IMR-90 (cell line): ENCODE measurements at regions of chr1 and their contacts with region 1.

Region 1: GRCh38 chr1:225474986-225475820 is 47.4 kb upstream of the LBR start:
- DNase-seq: peak; percentile 66
- ATAC-seq: peak; percentile 93
- H3K4me3 ChIP-seq: no peak overlapping the region
- H3K27ac ChIP-seq: peak overlapping the region; percentile 31; the same call in 1 of the 2 replicates
- H3K4me1 ChIP-seq: peaks cover 2% of the 10 kb centered on the region
- H3K27me3 ChIP-seq: peaks cover 2% of the 10 kb centered on the region; the same call in 1 of the 2 replicates
- CTCF ChIP-seq: peak; percentile 100; the same call in 1 of the 2 replicates
- POLR2A ChIP-seq: peak; percentile 74
- RAD21 ChIP-seq: peak; percentile 100

Region 2: GRCh38 chr1:225388372-225388771 is 86.8 kb before region 1 on chr1:
- CTCF ChIA-PET with region 1: no interaction called
- POLR2A ChIA-PET with region 1: no interaction called
- dilution Hi-C with region 1: no loop called
- in situ Hi-C with region 1: no loop called
- intact Hi-C with region 1: no loop called
- DNase-seq: peak; percentile 5
- ATAC-seq: no peak
- H3K4me3 ChIP-seq: no peak overlapping the region
- H3K27ac ChIP-seq: no peak overlapping the region
- H3K4me1 ChIP-seq: no peaks in the 10 kb centered on the region
- H3K27me3 ChIP-seq: no peaks in the 10 kb centered on the region
- CTCF ChIP-seq: no peak
- POLR2A ChIP-seq: no peak
- RAD21 ChIP-seq: no peak

Region 3: GRCh38 chr1:225772323-225772768 is 297.1 kb after region 1 on chr1:
- CTCF ChIA-PET with region 1: interaction called, 23 read pairs
- POLR2A ChIA-PET with region 1: no interaction called
- dilution Hi-C with region 1: no loop called
- in situ Hi-C with region 1: loop called (anchors 5 kb)
- intact Hi-C with region 1: loop called (anchors 1 kb)
- DNase-seq: peak; percentile 88
- ATAC-seq: peak; percentile 90
- H3K4me3 ChIP-seq: no peak overlapping the region
- H3K27ac ChIP-seq: peak overlapping the region; percentile 20; the same call in 1 of the 2 replicates
- H3K4me1 ChIP-seq: peaks cover 16% of the 10 kb centered on the region
- H3K27me3 ChIP-seq: no peaks in the 10 kb centered on the region
- CTCF ChIP-seq: peak; percentile 94
- POLR2A ChIP-seq: peak; percentile 60; the same call in 1 of the 2 replicates
- RAD21 ChIP-seq: peak; percentile 99

Region 4: GRCh38 chr1:225845571-225846259 is 370.5 kb after region 1 on chr1:
- CTCF ChIA-PET with region 1: interaction called, 12 read pairs
- POLR2A ChIA-PET with region 1: no interaction called
- dilution Hi-C with region 1: no loop called
- in situ Hi-C with region 1: loop called (anchors 10 kb)
- intact Hi-C with region 1: loop called (anchors 1 kb)
- DNase-seq: peak; percentile 75
- ATAC-seq: peak; percentile 86
- H3K4me3 ChIP-seq: no peak overlapping the region
- H3K27ac ChIP-seq: no peak overlapping the region
- H3K4me1 ChIP-seq: peaks cover 3% of the 10 kb centered on the region; the same call in 1 of the 2 replicates
- H3K27me3 ChIP-seq: no peaks in the 10 kb centered on the region
- CTCF ChIP-seq: peak; percentile 89
- POLR2A ChIP-seq: 0 out of 2 replicates have a peak, but pooled peaks have one; percentile 54
- RAD21 ChIP-seq: peak; percentile 93

Region 5: GRCh38 chr1:225977937-225978748 is 502.9 kb after region 1 on chr1:
- CTCF ChIA-PET with region 1: interaction called, 10 read pairs
- POLR2A ChIA-PET with region 1: no interaction called
- dilution Hi-C with region 1: loop called (anchors 25 kb)
- in situ Hi-C with region 1: loop called (anchors 5 kb)
- intact Hi-C with region 1: loop called (anchors 1 kb)
- DNase-seq: no peak
- ATAC-seq: no peak
- H3K4me3 ChIP-seq: no peak overlapping the region
- H3K27ac ChIP-seq: no peak overlapping the region
- H3K4me1 ChIP-seq: no peaks in the 10 kb centered on the region
- H3K27me3 ChIP-seq: no peaks in the 10 kb centered on the region
- CTCF ChIP-seq: no peak
- POLR2A ChIP-seq: no peak
- RAD21 ChIP-seq: no peak

Region 6: GRCh38 chr1:226109829-226110248 is 634.6 kb after region 1 on chr1:
- CTCF ChIA-PET with region 1: interaction called, 10 read pairs
- POLR2A ChIA-PET with region 1: no interaction called
- dilution Hi-C with region 1: no loop called
- in situ Hi-C with region 1: no loop called
- intact Hi-C with region 1: no loop called
- DNase-seq: peak; percentile 70
- ATAC-seq: peak; percentile 93
- H3K4me3 ChIP-seq: peak overlapping the region; percentile 57
- H3K27ac ChIP-seq: peak overlapping the region; percentile 69
- H3K4me1 ChIP-seq: peaks cover 4% of the 10 kb centered on the region; the same call in 1 of the 2 replicates
- H3K27me3 ChIP-seq: no peaks in the 10 kb centered on the region
- CTCF ChIP-seq: no peak
- POLR2A ChIP-seq: no peak
- RAD21 ChIP-seq: no peak